ENCODE measurements at regions of chr9 and their contacts with region 1.

Region 1: GRCh38 chr9:34675048-34675714 is 12.7 kb upstream of the CCL27 start:
- DNase-seq: no peak
- H3K4me3 ChIP-seq: no peak overlapping the region
- CTCF ChIP-seq: peak; percentile 87

Region 2: DNA sequence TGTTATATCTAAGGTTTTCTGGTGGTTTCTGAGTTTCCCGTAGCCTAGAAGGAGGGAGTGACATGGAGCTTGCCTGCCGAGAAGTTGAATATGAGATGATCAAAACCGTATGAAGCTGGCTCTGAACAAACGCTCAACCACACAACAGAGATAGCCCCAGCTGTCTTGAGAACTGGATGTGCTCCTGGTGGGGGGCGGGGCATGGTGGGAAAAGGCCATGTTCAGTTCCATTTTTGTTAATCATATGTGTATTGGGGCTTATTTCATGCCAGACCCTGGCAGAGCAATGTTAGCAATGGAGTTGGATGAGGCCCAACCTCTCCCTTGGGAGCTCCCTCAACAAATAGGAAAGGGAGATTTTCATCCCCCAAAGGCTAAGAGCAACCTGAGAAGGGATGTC is 11.1 kb after region 1 on chr9:
- CTCF ChIA-PET with region 1: interaction called, 13 read pairs
- POLR2A ChIA-PET with region 1: no interaction called
- DNase-seq: no peak
- H3K4me3 ChIP-seq: no peak overlapping the region
- CTCF ChIP-seq: no peak

Measured in AG04449 (cell line).